ENCODE measurements at regions of chr6 and their contacts with region 1.

Region 1: DNA sequence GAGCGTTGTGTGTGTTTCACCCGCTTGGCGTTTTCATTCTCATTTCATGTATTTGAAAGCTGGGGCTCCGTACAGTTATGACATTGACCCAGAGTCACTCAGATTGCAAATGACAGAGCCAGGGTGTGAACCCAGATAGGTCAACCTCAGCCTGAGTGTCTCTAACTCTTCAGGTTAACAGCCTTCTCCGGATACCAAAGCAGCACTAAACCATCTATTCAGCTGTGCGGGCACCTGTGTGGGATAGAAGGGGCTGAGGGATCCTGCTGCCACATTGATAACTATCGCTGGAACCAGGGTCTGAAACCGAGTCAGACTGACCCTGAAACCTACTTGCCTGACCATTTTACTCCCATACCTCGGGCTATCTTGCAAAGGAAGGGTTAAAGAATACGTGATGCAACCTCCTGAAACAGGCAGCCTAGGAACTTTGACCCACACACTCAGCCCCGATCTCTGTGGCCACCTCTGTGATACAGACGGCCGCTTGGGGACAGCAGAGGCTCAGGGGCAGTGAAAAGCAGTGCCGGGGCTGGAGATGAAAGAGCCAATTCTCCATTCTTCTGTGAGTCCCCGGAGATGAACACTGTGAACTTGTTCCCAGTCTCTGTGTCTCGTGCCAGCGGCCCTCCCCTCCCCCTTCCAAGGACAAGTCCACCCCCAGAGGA is 233.5 kb upstream of the QKI start:
- DNase-seq: peak; percentile 86
- ATAC-seq: peak; percentile 95

Region 2: DNA sequence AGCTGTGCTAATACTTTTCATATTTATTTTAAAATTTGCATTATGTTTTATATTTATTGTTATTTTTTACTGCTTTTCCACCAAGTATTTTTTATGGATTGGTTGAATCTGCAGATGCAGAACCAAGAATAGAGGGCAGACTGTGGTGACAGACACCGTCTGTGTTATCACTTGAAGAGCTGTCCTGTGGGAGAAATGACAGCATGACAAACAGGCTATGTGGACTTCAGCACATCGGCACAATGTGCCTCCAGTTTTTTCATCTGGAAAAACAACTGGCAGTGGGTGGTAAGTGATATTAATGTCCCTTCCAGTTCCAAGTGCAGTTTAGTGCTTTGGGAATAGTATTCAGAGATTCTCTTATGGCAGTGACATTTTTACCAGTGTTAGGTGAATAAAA is 946.4 kb before region 1 on chr6:
- intact Hi-C with region 1: no loop called
- DNase-seq: no peak
- ATAC-seq: peak; percentile 73

Region 3: GRCh38 chr6:163554663-163555062 is 373.7 kb after region 1 on chr6:
- intact Hi-C with region 1: loop called (anchors 10 kb)
- DNase-seq: peak; percentile 74
- ATAC-seq: peak; percentile 39

Region 4: DNA sequence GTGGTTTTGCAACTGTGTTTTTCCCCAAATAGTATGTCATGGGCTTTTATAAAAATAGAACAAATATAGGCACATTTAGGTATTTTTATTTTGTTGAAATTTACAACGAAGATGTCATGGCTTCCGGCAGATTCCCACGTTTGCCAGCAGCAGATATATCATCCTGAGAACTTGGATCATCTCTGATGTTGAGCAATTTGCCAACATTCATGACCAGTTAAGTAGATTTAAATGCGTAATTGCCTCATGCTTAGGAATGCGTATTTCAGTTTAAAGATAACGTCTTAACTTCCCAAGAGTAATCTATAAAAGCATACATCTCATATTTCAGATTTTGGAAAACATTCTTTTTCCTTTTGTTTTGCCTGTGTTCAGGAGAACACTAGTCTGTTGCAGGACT is 691.3 kb after region 1 on chr6:
- intact Hi-C with region 1: no loop called
- DNase-seq: no peak
- ATAC-seq: no peak

Measured in Right ventricle myocardium inferior (tissue), 1 donor.